ENCODE measurements at regions of chr1 and their contacts with region 1.

Region 1: DNA sequence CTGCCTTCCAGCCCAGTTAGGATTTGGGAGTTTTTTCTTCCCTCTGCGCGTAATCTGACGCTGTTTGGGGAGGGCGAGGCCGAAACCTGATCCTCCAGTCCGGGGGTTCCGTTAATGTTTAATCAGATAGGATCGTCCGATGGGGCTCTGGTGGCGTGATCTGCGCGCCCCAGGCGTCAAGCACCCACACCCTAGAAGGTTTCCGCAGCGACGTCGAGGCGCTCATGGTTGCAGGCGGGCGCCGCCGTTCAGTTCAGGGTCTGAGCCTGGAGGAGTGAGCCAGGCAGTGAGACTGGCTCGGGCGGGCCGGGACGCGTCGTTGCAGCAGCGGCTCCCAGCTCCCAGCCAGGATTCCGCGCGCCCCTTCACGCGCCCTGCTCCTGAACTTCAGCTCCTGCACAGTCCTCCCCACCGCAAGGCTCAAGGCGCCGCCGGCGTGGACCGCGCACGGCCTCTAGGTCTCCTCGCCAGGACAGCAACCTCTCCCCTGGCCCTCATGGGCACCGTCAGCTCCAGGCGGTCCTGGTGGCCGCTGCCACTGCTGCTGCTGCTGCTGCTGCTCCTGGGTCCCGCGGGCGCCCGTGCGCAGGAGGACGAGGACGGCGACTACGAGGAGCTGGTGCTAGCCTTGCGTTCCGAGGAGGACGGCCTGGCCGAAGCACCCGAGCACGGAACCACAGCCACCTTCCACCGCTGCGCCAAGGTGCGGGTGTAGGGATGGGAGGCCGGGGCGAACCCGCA is at the start of gene PCSK9:
- DNase-seq: peak; percentile 75 to 76
- H3K4me3 ChIP-seq: peak within 1 kb of the TSS; percentile 60
- H3K27ac ChIP-seq: no peak within 1 kb of the TSS
- H3K4me1 ChIP-seq: peaks cover 35% of the 10 kb centered on the region
- H3K27me3 ChIP-seq: no peaks in the 10 kb centered on the region
- CTCF ChIP-seq: no peak
- total RNA-seq, gene PCSK9: 60.7 and 133 TPM in 2 replicates

Region 2: GRCh38 chr1:55179177-55179835 is 139.8 kb after region 1 on chr1:
- CTCF ChIA-PET with region 1: no interaction called
- POLR2A ChIA-PET with region 1: interaction called, 15 read pairs
- intact Hi-C with region 1: no loop called
- DNase-seq: no peak
- H3K4me3 ChIP-seq: no peak overlapping the region
- H3K27ac ChIP-seq: peak overlapping the region; percentile 31; the same call in 1 of the 2 replicates
- H3K4me1 ChIP-seq: peaks cover 6% of the 10 kb centered on the region; the same call in 1 of the 2 replicates
- H3K27me3 ChIP-seq: no peaks in the 10 kb centered on the region
- CTCF ChIP-seq: no peak

Measured in PC-9 (cell line).